ENCODE measurements at regions of chr1 and their contacts with region 1.

Region 1: GRCh38 chr1:151739590-151740375 is 18.5 kb downstream of the RIIAD1 start:
- DNase-seq: no peak
- H3K4me3 Mint-ChIP-seq: no peak overlapping the region
- H3K27ac Mint-ChIP-seq: no peak overlapping the region
- H3K4me1 Mint-ChIP-seq: no peaks in the 10 kb centered on the region
- H3K27me3 Mint-ChIP-seq: no peaks in the 10 kb centered on the region

Region 2: DNA sequence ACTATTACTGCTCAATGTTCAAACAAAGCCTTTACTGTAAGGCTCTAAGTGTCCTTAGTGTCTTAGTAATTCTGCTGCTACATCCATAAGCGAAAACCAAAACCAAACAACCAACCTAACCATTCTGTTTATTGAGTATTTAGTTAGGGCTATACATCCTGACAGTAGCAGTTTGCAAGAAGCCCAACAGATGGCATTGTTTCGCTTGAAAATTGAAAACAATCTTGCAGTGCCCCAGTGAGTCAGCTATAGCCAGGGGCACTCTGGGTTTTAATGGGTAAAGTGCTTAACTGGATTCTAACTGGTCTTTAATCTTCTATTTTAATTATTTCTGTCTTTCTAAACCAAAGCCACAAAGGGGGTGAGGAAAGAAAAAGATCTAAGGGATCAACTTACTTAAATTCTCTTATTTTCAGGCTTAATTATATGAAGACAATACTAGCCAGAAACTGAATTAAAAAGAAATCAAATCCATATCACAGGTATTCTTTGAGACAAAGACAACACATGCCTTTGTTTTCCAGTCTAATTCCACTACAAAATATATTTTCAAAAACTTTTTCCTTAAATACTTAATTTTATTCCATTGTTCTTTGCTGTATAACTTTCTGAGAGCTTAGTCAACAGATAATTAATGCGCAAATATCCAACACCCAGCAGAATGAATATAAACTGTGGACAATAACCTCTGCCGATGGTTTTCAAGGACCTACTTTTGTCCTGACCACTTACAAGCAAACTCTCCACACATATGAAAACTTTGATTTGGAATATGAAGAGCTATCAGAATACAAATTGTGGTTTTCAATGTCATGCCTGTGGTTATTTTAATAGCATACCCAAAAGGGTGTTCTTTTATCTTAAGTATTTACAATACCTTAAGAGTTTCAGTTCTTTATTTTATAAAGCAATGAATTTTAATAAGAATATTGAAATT is 295.7 kb before region 1 on chr1:
- CTCF ChIA-PET with region 1: interaction called, 4 read pairs
- intact Hi-C with region 1: loop called (anchors 1 kb)
- DNase-seq: peak; percentile 85
- H3K4me3 Mint-ChIP-seq: no peak overlapping the region
- H3K27ac Mint-ChIP-seq: no peak overlapping the region
- H3K4me1 Mint-ChIP-seq: peaks cover 53% of the 10 kb centered on the region
- H3K27me3 Mint-ChIP-seq: no peaks in the 10 kb centered on the region

Region 3: GRCh38 chr1:151534665-151535278 is 205.0 kb before region 1 on chr1:
- CTCF ChIA-PET with region 1: interaction called, 8 read pairs
- intact Hi-C with region 1: loop called (anchors 1 kb)
- DNase-seq: peak; percentile 91
- H3K4me3 Mint-ChIP-seq: no peak overlapping the region
- H3K27ac Mint-ChIP-seq: no peak overlapping the region
- H3K4me1 Mint-ChIP-seq: peaks cover 1% of the 10 kb centered on the region
- H3K27me3 Mint-ChIP-seq: no peaks in the 10 kb centered on the region

Region 4: DNA sequence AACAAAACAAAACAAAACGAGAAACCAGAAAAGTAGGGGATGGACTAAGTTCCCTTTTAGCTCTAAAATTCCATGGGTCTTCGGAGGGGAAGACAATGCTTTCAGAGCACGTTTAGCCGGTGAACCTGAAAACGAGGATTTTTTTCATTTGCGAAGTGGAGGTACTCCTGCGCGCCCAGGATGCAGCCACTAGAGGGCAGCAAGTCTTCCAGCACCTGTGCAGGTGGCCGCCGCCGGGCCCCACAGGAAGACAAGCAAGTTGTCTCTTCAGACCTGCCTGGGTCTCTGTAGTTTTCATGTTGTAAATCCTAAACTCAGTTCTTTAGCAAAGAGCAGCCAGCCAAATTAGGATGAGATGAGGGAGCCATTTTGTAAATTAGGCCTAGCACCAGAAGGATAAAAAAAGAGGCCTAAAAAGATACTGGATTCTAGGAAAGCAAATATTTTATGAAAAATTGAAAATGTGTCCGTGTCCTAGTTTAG is 145.6 kb before region 1 on chr1:
- CTCF ChIA-PET with region 1: interaction called, 19 read pairs
- intact Hi-C with region 1: loop called (anchors 1 kb)
- DNase-seq: peak; percentile 94
- H3K4me3 Mint-ChIP-seq: peak overlapping the region; percentile 50
- H3K27ac Mint-ChIP-seq: no peak overlapping the region
- H3K4me1 Mint-ChIP-seq: peaks cover 10% of the 10 kb centered on the region
- H3K27me3 Mint-ChIP-seq: no peaks in the 10 kb centered on the region

Region 5: DNA sequence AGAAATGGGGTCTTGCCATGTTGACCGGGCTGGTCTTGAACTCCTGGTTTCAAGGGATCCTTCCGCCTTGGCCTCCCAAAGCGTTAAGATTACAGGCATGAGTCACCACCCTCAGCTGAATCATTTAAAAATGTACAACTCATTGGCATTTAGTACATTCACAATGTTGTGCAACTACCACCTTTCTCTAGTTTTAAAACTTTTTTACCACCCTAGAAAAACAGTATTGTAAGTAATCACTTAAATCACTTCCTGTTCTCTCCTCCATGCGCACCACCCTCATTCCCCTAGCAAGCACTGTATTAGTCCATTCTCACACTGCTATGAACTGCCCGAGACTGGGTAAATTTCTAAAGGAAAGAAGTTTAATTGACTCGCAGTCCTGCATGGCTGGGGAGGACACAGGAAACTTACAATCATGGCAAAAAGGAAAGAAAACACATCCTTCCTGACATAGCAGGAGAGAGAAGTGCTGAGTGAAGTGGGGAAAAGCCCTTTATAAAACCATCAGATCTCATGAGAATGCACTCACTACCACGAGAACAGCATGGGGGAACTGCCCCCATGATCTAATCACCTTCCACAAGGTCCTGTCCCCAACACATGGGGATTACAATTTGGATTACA is 128.1 kb after region 1 on chr1:
- CTCF ChIA-PET with region 1: no interaction called
- intact Hi-C with region 1: no loop called
- DNase-seq: peak; percentile 18
- H3K4me3 Mint-ChIP-seq: no peak overlapping the region
- H3K27ac Mint-ChIP-seq: peak overlapping the region; percentile 62
- H3K4me1 Mint-ChIP-seq: peaks cover 10% of the 10 kb centered on the region
- H3K27me3 Mint-ChIP-seq: no peaks in the 10 kb centered on the region